ENCODE measurements at regions of chr1 and their contacts with region 1.

Region 1: DNA sequence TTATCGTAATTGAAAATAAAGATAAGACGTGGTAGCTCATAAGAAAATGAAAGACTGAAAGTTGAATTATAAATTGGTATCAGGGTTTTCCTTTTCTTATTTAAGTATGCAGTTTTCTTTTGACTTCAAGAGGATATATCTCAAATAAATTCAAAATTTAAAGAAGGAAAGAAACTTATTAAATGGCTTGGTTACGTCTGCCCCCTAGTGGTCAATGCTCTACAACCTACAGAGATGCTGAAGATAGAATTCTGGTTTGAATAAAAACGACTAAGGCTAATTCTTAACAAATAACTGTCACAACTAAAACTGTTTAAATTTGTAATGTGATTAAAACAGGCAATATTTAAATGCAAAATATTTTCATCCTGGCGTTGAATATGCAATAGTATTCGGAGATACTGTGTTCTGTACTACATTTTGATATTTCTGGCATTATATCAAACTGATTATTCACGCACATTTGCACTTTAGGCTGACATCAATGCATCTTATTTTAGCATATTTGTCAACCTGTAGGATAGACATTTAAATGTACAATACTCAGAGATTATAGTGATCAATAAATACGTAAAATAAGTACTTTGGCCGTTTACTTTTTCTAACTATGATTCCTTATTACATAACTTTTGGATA is 26.8 kb downstream of the IFI44 start:
- DNase-seq: peak; percentile 44
- H3K4me3 Mint-ChIP-seq: no peak overlapping the region
- H3K27ac Mint-ChIP-seq: no peak overlapping the region
- H3K4me1 Mint-ChIP-seq: peaks cover 5% of the 10 kb centered on the region
- H3K27me3 Mint-ChIP-seq: peaks cover 1% of the 10 kb centered on the region

Region 2: DNA sequence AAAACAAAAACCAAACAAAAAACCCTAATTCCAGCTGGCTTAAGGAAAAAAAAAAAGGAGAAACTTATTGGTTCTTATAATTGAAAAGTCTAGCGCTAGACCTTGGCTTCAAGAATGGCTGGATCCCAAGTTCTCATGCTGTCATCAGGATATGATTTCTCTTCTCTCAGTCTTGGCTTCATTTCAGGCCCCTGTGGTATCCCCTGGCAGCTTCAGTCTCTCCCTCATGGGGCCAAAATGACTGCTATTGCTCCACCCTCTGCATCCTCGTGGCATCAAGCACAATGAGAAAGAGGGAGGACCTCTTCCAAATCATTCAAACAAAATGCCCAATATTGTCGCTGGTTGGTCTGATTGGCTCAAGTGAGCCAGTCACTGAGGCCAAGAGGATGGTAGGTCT is 550.0 kb before region 1 on chr1:
- CTCF ChIA-PET with region 1: interaction called, 5 read pairs
- POLR2A ChIA-PET with region 1: no interaction called
- intact Hi-C with region 1: loop called (anchors 1 kb)
- DNase-seq: no peak
- H3K4me3 Mint-ChIP-seq: no peak overlapping the region
- H3K27ac Mint-ChIP-seq: no peak overlapping the region
- H3K4me1 Mint-ChIP-seq: no peaks in the 10 kb centered on the region
- H3K27me3 Mint-ChIP-seq: no peaks in the 10 kb centered on the region

Region 3: GRCh38 chr1:78153092-78153736 is 523.3 kb before region 1 on chr1:
- CTCF ChIA-PET with region 1: no interaction called
- POLR2A ChIA-PET with region 1: no interaction called
- intact Hi-C with region 1: no loop called
- DNase-seq: no peak
- H3K4me3 Mint-ChIP-seq: no peak overlapping the region
- H3K27ac Mint-ChIP-seq: no peak overlapping the region
- H3K4me1 Mint-ChIP-seq: no peaks in the 10 kb centered on the region
- H3K27me3 Mint-ChIP-seq: peaks cover 9% of the 10 kb centered on the region

Region 4: GRCh38 chr1:78333502-78333901 is 343.0 kb before region 1 on chr1:
- CTCF ChIA-PET with region 1: no interaction called
- POLR2A ChIA-PET with region 1: no interaction called
- intact Hi-C with region 1: loop called (anchors 2 kb)
- DNase-seq: no peak
- H3K4me3 Mint-ChIP-seq: no peak overlapping the region
- H3K27ac Mint-ChIP-seq: no peak overlapping the region
- H3K4me1 Mint-ChIP-seq: no peaks in the 10 kb centered on the region
- H3K27me3 Mint-ChIP-seq: peaks cover 1% of the 10 kb centered on the region

Region 5: GRCh38 chr1:78825561-78825960 is 149.1 kb after region 1 on chr1:
- CTCF ChIA-PET with region 1: no interaction called
- POLR2A ChIA-PET with region 1: no interaction called
- intact Hi-C with region 1: no loop called
- DNase-seq: no peak
- H3K4me3 Mint-ChIP-seq: no peak overlapping the region
- H3K27ac Mint-ChIP-seq: no peak overlapping the region
- H3K4me1 Mint-ChIP-seq: no peaks in the 10 kb centered on the region
- H3K27me3 Mint-ChIP-seq: no peaks in the 10 kb centered on the region